ENCODE measurements at regions of chr9 and their contacts with region 1.

Region 1: GRCh38 chr9:35729700-35730485 is 2.1 kb downstream of the TLN1 start:
- DNase-seq: peak in 1 of 2 donors; percentile 62
- H3K4me3 ChIP-seq: peak overlapping the region; percentile 74 to 82 (median 79)
- H3K27ac ChIP-seq: peak overlapping the region; percentile 98 to 99
- H3K4me1 ChIP-seq: peaks cover 13 to 30% of the 10 kb centered on the region in 2 donors
- H3K27me3 ChIP-seq: no peaks in the 10 kb centered on the region
- CTCF ChIP-seq: peak; percentile 40 to 79 (median 52)
- POLR2A ChIP-seq: no peak

Region 2: GRCh38 chr9:35696525-35697215 is 33.2 kb before region 1 on chr9:
- intact Hi-C with region 1: loop called (anchors 1 kb)
- DNase-seq: peak in 1 of 2 donors; percentile 54
- H3K4me3 ChIP-seq: no peak overlapping the region
- H3K27ac ChIP-seq: peak overlapping the region; percentile 36 to 66
- H3K4me1 ChIP-seq: no peaks in the 10 kb centered on the region
- H3K27me3 ChIP-seq: no peaks in the 10 kb centered on the region
- CTCF ChIP-seq: peak; percentile 51 to 74 (median 71)
- POLR2A ChIP-seq: no peak

Region 3: GRCh38 chr9:35774907-35775635 is 45.2 kb after region 1 on chr9:
- intact Hi-C with region 1: no loop called
- DNase-seq: no peak
- H3K4me3 ChIP-seq: no peak overlapping the region
- H3K27ac ChIP-seq: no peak overlapping the region
- H3K4me1 ChIP-seq: peaks cover 0 to 15% of the 10 kb centered on the region in 2 donors
- H3K27me3 ChIP-seq: no peaks in the 10 kb centered on the region
- CTCF ChIP-seq: no peak
- POLR2A ChIP-seq: no peak